Right cardiac atrium (tissue), 5 donors: ENCODE measurements at regions of chr21 and their contacts with region 1.

Region 1: GRCh38 chr21:36028127-36029069 is 31.9 kb downstream of the SETD4 start:
- DNase-seq: peak in 2 of 3 donors; percentile 59 to 83
- ATAC-seq: peak; percentile 83 to 89
- H3K4me3 ChIP-seq: no peak overlapping the region
- H3K27ac ChIP-seq: no peak overlapping the region
- H3K4me1 ChIP-seq: peaks cover 2% of the 10 kb centered on the region
- H3K27me3 ChIP-seq: no peaks in the 10 kb centered on the region

Region 2: DNA sequence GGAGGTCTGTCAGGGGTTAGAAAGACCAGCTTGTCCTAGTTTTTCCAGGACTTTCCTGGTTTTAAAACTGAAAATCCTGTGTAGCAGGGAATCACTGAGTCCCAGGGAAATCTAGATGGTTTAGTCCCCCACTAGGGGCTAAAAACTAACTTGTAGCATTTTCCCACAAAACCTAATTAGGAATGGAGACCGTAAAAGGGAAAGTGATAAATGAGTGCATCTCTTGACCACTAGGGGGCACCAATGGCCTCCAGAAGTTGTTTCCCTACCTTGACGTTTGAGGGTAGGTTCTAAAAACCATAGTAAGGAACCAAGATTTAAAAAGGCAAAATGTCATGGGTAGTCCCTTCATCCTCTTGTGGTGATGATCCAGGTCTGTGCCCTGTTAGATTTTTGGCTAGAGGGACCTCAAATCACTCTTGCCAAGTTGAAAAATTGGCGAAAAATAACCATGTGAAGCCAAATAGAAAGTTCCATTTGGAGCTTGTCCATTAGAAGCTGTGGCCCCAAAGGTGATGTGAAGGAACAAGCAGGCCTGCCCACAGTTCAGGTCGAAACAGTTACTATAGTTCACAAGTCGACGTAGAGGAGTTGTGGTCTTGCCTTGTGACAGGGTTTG is 1335.1 kb before region 1 on chr21:
- intact Hi-C with region 1: loop called in 1 of 4 experiments (anchors 10 kb)
- DNase-seq: no peak
- ATAC-seq: peak in 1 of 2 donors; percentile 29
- H3K4me3 ChIP-seq: no peak overlapping the region
- H3K27ac ChIP-seq: no peak overlapping the region
- H3K4me1 ChIP-seq: no peaks in the 10 kb centered on the region
- H3K27me3 ChIP-seq: no peaks in the 10 kb centered on the region

Region 3: DNA sequence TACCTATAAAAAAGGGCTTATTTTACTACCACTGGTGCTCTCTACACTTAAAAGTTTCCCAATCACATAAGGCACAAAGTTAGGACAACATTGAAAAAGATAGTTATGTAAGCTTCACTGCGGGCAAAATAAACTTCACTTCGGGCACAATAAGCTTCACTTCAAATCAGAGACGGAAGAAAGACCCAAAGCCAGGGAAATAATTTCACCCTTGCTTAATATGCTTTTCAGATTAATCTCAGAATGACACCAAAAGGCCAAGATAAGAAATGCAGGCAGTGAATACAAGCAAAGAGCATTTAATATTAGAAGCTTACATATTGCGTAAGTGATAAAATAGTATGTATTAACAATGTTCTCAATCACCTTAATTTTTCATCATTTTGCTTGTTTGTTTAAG is 412.3 kb before region 1 on chr21:
- intact Hi-C with region 1: no loop called
- DNase-seq: no peak
- ATAC-seq: no peak
- H3K4me3 ChIP-seq: no peak overlapping the region
- H3K27ac ChIP-seq: no peak overlapping the region
- H3K4me1 ChIP-seq: no peaks in the 10 kb centered on the region
- H3K27me3 ChIP-seq: no peaks in the 10 kb centered on the region

Region 4: DNA sequence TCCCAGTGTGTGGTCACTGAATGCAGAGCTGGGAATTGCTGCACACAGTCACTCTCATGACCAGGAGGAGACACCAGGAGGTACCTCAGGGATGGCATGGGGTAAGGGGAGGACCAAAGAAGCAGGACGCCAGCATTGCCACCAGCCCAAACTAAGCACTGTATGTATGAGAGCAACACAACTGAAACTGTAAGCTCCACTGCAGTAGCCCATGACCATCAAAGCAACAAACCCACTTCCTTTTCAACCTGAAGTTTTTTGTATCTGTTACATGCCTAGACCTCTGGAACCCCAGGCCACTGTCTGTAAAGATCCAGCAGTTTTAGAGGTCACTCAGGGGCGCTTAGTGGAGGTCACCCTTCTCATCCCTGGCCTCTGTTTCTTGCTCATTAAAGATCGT is 132.3 kb before region 1 on chr21:
- intact Hi-C with region 1: no loop called
- DNase-seq: no peak
- ATAC-seq: no peak
- H3K4me3 ChIP-seq: no peak overlapping the region
- H3K27ac ChIP-seq: no peak overlapping the region
- H3K4me1 ChIP-seq: no peaks in the 10 kb centered on the region
- H3K27me3 ChIP-seq: no peaks in the 10 kb centered on the region

Region 5: GRCh38 chr21:35989138-35989735 is 39.2 kb before region 1 on chr21:
- intact Hi-C with region 1: no loop called
- DNase-seq: peak in 2 of 3 donors; percentile 69 to 79
- ATAC-seq: peak; percentile 63 to 72
- H3K4me3 ChIP-seq: no peak overlapping the region
- H3K27ac ChIP-seq: no peak overlapping the region
- H3K4me1 ChIP-seq: no peaks in the 10 kb centered on the region
- H3K27me3 ChIP-seq: no peaks in the 10 kb centered on the region